GM12878 (cell line): ENCODE measurements at regions of chr17 and their contacts with region 1.

Region 1: DNA sequence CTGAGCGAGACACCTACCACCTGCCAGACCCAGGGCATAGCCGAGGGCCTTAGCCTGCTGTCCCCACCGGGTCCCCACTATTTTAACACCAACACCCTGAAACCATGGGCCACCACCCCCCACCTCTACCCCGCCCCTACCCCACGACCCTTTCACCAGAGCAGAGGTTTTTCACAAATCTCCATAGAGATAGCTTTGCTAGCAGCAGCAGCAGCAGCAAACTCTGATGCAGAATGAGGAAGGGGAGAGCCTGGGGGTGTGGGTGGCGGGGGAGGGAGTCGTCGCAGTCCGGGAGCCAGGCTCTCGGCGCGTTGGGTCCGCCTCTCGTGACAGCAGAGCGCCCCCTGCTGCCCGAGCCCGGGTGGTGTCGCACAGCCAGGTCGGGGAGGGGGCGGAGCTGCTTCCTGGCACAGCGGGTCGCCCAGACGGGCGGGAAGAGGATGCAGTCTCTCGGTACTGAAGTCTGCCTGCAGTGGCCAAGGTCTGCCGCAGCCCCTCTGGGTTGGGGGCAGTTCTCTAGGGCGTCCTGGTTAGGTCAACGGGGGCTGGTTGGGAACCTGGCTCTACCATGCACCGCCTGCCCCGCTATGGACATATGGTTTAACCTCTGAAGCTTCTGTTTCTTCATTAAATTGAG is 38.1 kb upstream of the CCDC182 start:
- DNase-seq: no peak
- ATAC-seq: peak; percentile 95
- H3K4me3 ChIP-seq: no peak overlapping the region
- H3K27ac ChIP-seq: no peak overlapping the region
- H3K4me1 ChIP-seq: no peaks in the 10 kb centered on the region
- H3K27me3 ChIP-seq: peaks cover 1 to 2% of the 10 kb centered on the region in 2 experiments; a peak in 2 of 4 replicates
- CTCF ChIP-seq: peak; percentile 64 to 87 (median 78)
- EP300 ChIP-seq: no peak
- POLR2A ChIP-seq: no peak
- RAD21 ChIP-seq: peak; percentile 67

Region 2: GRCh38 chr17:57130761-57131461 is 652.3 kb before region 1 on chr17:
- CTCF ChIA-PET with region 1: interaction called, 25 read pairs
- POLR2A ChIA-PET with region 1: no interaction called
- RAD21 ChIA-PET with region 1: interaction called, 3 read pairs
- SMC1A ChIA-PET with region 1: interaction called, 4 read pairs
- in situ Hi-C with region 1: no loop called
- intact Hi-C with region 1: no loop called
- DNase-seq: peak; percentile 25
- ATAC-seq: peak; percentile 99
- H3K4me3 ChIP-seq: no peak overlapping the region
- H3K27ac ChIP-seq: no peak overlapping the region
- H3K4me1 ChIP-seq: peaks cover 5% of the 10 kb centered on the region
- H3K27me3 ChIP-seq: no peaks in the 10 kb centered on the region
- CTCF ChIP-seq: peak; percentile 59 to 84 (median 80)
- EP300 ChIP-seq: no peak
- POLR2A ChIP-seq: no peak
- RAD21 ChIP-seq: peak; percentile 79

Region 3: DNA sequence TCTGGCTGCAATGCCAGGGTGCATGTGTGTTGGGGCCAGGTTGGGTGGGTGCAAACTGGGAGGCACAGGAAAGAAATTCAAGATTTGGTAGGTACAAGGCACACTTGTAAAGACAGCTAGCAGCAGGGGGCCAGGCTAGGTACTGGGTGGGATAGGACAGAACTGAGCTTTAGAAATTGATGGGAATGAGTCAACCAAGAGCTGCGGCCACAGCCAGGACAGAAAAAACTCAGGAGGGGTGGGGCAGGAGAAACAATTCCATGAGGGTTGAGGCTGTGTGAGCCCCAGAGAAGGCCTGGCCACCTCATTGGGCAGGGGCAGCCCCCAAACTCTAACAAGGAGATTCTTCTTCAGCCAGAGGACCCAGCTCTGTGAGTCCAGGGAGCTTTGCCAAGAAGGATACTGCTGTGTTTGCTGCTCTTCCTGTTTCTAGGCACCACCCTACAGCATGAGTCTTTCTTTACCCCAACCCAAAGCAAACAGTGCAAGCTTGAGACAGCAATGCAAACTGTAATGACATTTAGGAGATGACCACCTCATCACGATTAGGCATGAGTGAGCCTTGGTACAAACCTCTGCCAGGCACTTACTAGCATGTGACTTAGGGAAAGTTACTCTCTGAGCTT is 16.8 kb before region 1 on chr17:
- CTCF ChIA-PET with region 1: interaction called, 23 read pairs
- POLR2A ChIA-PET with region 1: no interaction called
- RAD21 ChIA-PET with region 1: no interaction called
- SMC1A ChIA-PET with region 1: interaction called, 3 read pairs
- in situ Hi-C with region 1: no loop called
- intact Hi-C with region 1: no loop called
- DNase-seq: no peak
- ATAC-seq: no peak
- H3K4me3 ChIP-seq: no peak overlapping the region
- H3K27ac ChIP-seq: no peak overlapping the region
- H3K4me1 ChIP-seq: no peaks in the 10 kb centered on the region
- H3K27me3 ChIP-seq: peaks cover 3 to 10% of the 10 kb centered on the region in 2 experiments
- CTCF ChIP-seq: no peak
- EP300 ChIP-seq: no peak
- POLR2A ChIP-seq: no peak
- RAD21 ChIP-seq: no peak

Region 4: DNA sequence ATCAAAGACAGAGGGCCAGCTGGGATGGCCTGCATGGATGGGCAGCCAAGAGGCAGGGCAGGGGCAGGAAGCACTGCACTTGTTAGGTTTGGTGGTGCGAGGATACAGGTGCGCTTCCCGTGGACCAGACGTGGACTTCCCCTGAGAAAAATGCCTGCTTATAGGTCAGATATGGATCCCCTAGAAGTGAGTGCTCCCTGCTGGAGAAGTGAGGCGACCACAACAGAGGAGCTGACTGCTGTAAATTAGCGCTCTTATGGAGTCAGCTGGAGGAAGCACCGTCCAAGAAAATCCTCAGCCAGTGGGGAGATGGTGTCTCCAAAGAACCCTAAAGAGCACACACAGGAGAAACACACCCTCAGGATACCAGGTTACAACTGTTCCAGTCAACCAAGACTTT is 10.4 kb before region 1 on chr17:
- CTCF ChIA-PET with region 1: interaction called, 23 read pairs
- POLR2A ChIA-PET with region 1: no interaction called
- RAD21 ChIA-PET with region 1: no interaction called
- SMC1A ChIA-PET with region 1: interaction called, 3 read pairs
- in situ Hi-C with region 1: no loop called
- intact Hi-C with region 1: no loop called
- DNase-seq: no peak
- ATAC-seq: no peak
- H3K4me3 ChIP-seq: no peak overlapping the region
- H3K27ac ChIP-seq: no peak overlapping the region
- H3K4me1 ChIP-seq: no peaks in the 10 kb centered on the region
- H3K27me3 ChIP-seq: peaks cover 3 to 7% of the 10 kb centered on the region in 2 experiments
- CTCF ChIP-seq: no peak
- EP300 ChIP-seq: no peak
- POLR2A ChIP-seq: no peak
- RAD21 ChIP-seq: no peak

Region 5: DNA sequence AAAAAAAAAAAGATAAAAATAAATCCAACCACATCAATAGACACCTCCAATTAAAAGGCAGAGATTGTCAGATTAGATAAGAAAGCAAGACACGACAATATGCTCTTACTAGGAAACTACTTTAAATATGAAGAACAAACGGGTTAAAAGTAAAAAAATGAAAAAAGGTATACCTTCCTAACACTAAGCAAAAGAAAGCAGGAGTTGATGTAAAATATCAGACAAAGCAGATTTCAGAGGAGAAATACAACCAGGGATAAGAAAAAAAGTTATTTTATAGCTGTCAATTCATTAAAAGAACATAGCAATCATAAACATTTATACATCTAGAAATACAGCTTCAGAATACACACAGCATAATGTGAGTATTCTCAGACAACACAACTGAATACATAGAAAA is 11.6 kb after region 1 on chr17:
- CTCF ChIA-PET with region 1: interaction called, 11 read pairs
- POLR2A ChIA-PET with region 1: no interaction called
- RAD21 ChIA-PET with region 1: no interaction called
- SMC1A ChIA-PET with region 1: no interaction called
- in situ Hi-C with region 1: no loop called
- intact Hi-C with region 1: no loop called
- DNase-seq: no peak
- ATAC-seq: no peak
- H3K4me3 ChIP-seq: no peak overlapping the region
- H3K27ac ChIP-seq: no peak overlapping the region
- H3K4me1 ChIP-seq: no peaks in the 10 kb centered on the region
- H3K27me3 ChIP-seq: no peaks in the 10 kb centered on the region; a peak in 1 of 4 replicates
- CTCF ChIP-seq: no peak
- EP300 ChIP-seq: no peak
- POLR2A ChIP-seq: no peak
- RAD21 ChIP-seq: no peak

Region 6: GRCh38 chr17:57803025-57803424 is 19.8 kb after region 1 on chr17:
- CTCF ChIA-PET with region 1: interaction called, 11 read pairs
- POLR2A ChIA-PET with region 1: no interaction called
- RAD21 ChIA-PET with region 1: no interaction called
- SMC1A ChIA-PET with region 1: interaction called, 3 read pairs
- in situ Hi-C with region 1: no loop called
- intact Hi-C with region 1: no loop called
- DNase-seq: no peak
- ATAC-seq: no peak
- H3K4me3 ChIP-seq: no peak overlapping the region
- H3K27ac ChIP-seq: no peak overlapping the region
- H3K4me1 ChIP-seq: no peaks in the 10 kb centered on the region
- H3K27me3 ChIP-seq: no peaks in the 10 kb centered on the region
- CTCF ChIP-seq: no peak
- EP300 ChIP-seq: no peak
- POLR2A ChIP-seq: no peak
- RAD21 ChIP-seq: no peak

Region 7: GRCh38 chr17:57833179-57833939 is 50.1 kb after region 1 on chr17:
- CTCF ChIA-PET with region 1: interaction called, 26 read pairs
- POLR2A ChIA-PET with region 1: no interaction called
- RAD21 ChIA-PET with region 1: interaction called, 6 read pairs
- SMC1A ChIA-PET with region 1: interaction called, 5 read pairs
- in situ Hi-C with region 1: no loop called
- intact Hi-C with region 1: no loop called
- DNase-seq: no peak
- ATAC-seq: peak; percentile 95
- H3K4me3 ChIP-seq: 0 out of 2 replicates have a peak overlapping the region, but pooled peaks have one; percentile 4
- H3K27ac ChIP-seq: no peak overlapping the region
- H3K4me1 ChIP-seq: peaks cover 5% of the 10 kb centered on the region; the same call in 1 of the 2 replicates
- H3K27me3 ChIP-seq: no peaks in the 10 kb centered on the region
- CTCF ChIP-seq: peak; percentile 87 to 94 (median 92)
- EP300 ChIP-seq: no peak
- POLR2A ChIP-seq: no peak
- RAD21 ChIP-seq: peak; percentile 74